ENCODE measurements at regions of chr16 and their contacts with region 1.

Region 1: DNA sequence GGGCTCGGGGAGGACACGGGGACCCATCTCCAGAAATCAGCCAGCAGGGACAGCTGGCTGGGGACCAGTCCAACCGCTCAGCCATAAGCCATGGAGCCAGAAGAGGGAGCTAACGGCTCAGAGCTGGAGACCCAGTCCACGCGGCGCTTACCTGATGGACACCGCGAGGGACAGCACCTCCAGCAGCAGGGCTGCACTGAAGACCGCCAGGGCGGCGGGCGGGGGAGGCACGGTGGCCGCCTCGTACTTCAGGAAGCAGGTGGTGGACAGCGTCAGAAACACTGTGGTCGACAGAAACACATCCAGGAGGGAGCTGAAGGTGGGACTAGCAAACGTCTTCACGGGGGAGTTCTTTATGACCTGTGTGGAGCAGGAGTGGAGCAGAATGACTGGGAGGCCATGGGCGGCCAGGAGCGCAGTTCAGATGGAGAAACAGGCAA is 102.6 kb upstream of the CREBBP start:
- DNase-seq: peak; percentile 65
- H3K4me3 ChIP-seq: no peak overlapping the region
- H3K27ac ChIP-seq: no peak overlapping the region
- H3K4me1 ChIP-seq: peaks cover 6% of the 10 kb centered on the region
- H3K27me3 ChIP-seq: no peaks in the 10 kb centered on the region
- CTCF ChIP-seq: peak; percentile 81

Region 2: GRCh38 chr16:4160658-4161430 is 177.7 kb after region 1 on chr16:
- intact Hi-C with region 1: loop called (anchors 10 kb)
- DNase-seq: no peak
- H3K4me3 ChIP-seq: no peak overlapping the region
- H3K27ac ChIP-seq: no peak overlapping the region
- H3K4me1 ChIP-seq: no peaks in the 10 kb centered on the region
- H3K27me3 ChIP-seq: no peaks in the 10 kb centered on the region
- CTCF ChIP-seq: peak; percentile 11

Measured in left ventricle myocardium inferior (tissue), 1 donor.